OCI-LY7 (cell line): ENCODE measurements at regions of chr12 and their contacts with region 1.

Region 1: DNA sequence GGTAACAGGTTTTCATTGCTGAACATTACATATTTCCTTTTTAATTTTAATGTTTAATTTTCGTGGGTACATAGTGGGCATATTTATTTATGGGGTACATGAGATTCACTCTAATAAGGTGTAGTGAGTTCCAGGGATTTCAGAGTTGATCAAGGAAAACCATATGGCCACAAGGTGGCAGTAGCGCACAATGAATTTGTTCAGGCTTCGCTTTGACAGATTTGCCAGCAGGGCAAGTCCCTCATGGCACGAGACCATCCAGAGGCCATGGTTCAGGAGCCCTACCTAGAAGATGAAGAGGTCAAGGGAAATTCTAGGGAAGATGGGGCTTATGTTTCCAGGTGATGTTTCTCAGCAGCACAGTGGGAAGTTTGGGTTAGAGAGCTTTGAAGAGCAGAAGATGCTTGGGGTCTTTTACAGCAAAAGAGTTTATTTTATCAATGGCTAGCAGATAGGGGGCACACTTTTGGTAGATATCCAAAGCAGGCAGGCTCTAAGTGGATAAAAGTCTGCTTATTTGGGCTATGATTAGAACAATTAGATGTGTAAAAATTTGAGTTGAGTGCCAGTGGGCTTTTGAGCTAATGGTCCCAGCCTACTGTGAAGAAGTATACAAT is 1004.4 kb downstream of the AACS start:
- DNase-seq: peak; percentile 69
- H3K4me3 ChIP-seq: no peak overlapping the region
- H3K27ac ChIP-seq: no peak overlapping the region
- H3K4me1 ChIP-seq: no peaks in the 10 kb centered on the region
- CTCF ChIP-seq: peak; percentile 90

Region 2: GRCh38 chr12:126286203-126286602 is 216.5 kb after region 1 on chr12:
- CTCF ChIA-PET with region 1: no interaction called
- POLR2A ChIA-PET with region 1: no interaction called
- intact Hi-C with region 1: no loop called
- DNase-seq: no peak
- H3K4me3 ChIP-seq: no peak overlapping the region
- H3K27ac ChIP-seq: no peak overlapping the region
- H3K4me1 ChIP-seq: no peaks in the 10 kb centered on the region
- CTCF ChIP-seq: no peak

Region 3: DNA sequence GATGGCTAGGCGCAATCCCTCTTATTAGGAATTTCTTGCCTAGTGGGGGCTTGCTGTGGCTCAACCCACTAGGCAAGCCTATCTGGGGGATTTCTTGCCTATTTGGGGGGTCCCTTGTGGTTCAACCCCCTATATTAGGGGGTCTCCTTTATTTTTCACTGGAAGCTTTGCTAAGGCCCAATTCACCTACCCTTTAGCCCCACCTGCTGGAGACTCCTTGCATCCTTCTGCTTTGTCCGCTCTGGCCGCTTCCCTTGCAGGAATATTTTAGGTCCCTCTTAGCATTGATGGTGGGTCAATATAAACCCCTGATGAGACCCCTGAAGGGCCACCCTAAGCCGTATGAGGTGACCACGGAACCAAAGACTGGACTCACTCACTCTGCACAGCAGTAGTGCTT is 547.7 kb after region 1 on chr12:
- CTCF ChIA-PET with region 1: no interaction called
- POLR2A ChIA-PET with region 1: no interaction called
- intact Hi-C with region 1: loop called (anchors 2 kb)
- DNase-seq: no peak
- H3K4me3 ChIP-seq: no peak overlapping the region
- H3K27ac ChIP-seq: no peak overlapping the region
- H3K4me1 ChIP-seq: no peaks in the 10 kb centered on the region
- CTCF ChIP-seq: peak; percentile 59

Region 4: GRCh38 chr12:126663304-126664094 is 593.8 kb after region 1 on chr12:
- CTCF ChIA-PET with region 1: no interaction called
- POLR2A ChIA-PET with region 1: no interaction called
- intact Hi-C with region 1: loop called (anchors 2 kb)
- DNase-seq: peak; percentile 32
- H3K4me3 ChIP-seq: no peak overlapping the region
- H3K27ac ChIP-seq: no peak overlapping the region
- H3K4me1 ChIP-seq: no peaks in the 10 kb centered on the region
- CTCF ChIP-seq: peak; percentile 82

Region 5: GRCh38 chr12:126747530-126748149 is 678.0 kb after region 1 on chr12:
- CTCF ChIA-PET with region 1: no interaction called
- POLR2A ChIA-PET with region 1: no interaction called
- intact Hi-C with region 1: loop called (anchors 2 kb)
- DNase-seq: peak; percentile 38
- H3K4me3 ChIP-seq: no peak overlapping the region
- H3K27ac ChIP-seq: no peak overlapping the region
- H3K4me1 ChIP-seq: no peaks in the 10 kb centered on the region
- CTCF ChIP-seq: peak; percentile 98

Region 6: DNA sequence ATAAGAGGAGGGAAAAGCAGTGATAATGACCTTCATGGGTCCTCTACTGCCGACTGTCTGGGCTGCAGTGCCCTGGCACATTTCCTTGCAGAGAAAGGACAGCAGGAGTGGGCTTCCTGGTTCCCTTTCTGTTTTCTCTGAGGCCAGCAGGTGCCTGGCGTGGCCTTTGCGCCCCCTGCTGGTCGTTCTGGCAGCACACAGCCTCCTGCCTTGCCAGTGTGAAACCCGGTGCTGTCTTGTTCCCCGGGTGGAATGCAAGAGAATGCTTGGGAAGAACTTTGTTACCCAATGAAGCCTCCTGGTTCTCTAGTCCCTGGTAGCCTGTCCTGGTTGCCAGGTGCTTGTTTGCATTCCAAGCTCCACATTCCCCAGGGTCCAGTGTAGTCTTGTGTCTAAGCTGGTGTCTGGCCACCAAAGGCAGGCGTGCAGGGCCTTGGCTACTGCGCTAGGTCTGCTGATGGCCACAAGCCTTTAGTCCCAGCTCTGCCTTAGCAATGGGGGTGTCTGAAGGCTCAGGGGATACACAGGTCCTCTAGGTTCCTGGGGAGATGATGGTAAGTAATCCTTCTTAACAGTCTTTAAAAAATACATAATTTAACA is 804.9 kb after region 1 on chr12:
- CTCF ChIA-PET with region 1: no interaction called
- POLR2A ChIA-PET with region 1: no interaction called
- intact Hi-C with region 1: loop called (anchors 1 kb)
- DNase-seq: peak; percentile 60
- H3K4me3 ChIP-seq: no peak overlapping the region
- H3K27ac ChIP-seq: no peak overlapping the region
- H3K4me1 ChIP-seq: no peaks in the 10 kb centered on the region
- CTCF ChIP-seq: peak; percentile 90

Region 7: GRCh38 chr12:127381048-127381668 is 1311.5 kb after region 1 on chr12:
- CTCF ChIA-PET with region 1: no interaction called
- POLR2A ChIA-PET with region 1: no interaction called
- intact Hi-C with region 1: loop called (anchors 10 kb)
- DNase-seq: peak; percentile 24
- H3K4me3 ChIP-seq: no peak overlapping the region
- H3K27ac ChIP-seq: no peak overlapping the region
- H3K4me1 ChIP-seq: no peaks in the 10 kb centered on the region
- CTCF ChIP-seq: peak; percentile 89